ENCODE measurements at regions of chr17 and their contacts with region 1.

Region 1: GRCh38 chr17:30084788-30085187 is 31.8 kb upstream of the NSRP1 start:
- DNase-seq: no peak
- CTCF ChIP-seq: no peak

Region 2: DNA sequence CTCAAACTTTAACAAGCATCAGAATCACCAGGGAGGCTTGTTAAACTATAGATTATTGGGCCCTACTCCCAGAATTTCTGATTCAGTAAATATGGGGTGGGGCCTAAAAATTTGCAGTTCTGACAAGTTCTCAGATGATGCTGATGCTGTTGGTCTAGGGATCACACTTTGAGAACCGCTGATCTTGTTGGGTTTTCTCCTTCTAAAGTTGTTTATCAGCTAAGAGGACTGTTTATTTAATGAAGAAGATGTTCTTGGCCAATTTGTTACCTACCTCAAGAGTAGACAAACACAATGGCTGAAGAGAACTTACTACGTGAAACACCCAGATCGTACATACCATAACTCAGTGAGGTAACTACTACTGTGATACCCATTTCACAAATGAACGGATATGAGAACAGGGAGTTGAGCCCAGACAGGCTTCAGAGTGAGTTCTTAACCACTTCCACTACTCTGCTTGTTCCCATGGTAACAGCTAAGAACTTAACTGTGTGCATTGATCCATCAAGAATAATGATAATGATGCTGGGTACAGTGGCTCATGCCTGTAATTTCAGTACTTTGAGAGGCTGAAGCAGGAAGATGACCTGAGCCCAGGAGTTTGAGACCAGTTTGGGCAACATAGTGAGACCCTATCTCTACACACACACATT is 53.4 kb before region 1 on chr17:
- in situ Hi-C with region 1: loop called (anchors 10 kb)
- DNase-seq: peak; percentile 6
- CTCF ChIP-seq: no peak